Activated T-helper 1 cell treated with anti-CD3 and anti-CD28 coated beads, Interleukin-12 subunit alpha, Interleukin-12 subunit beta, Interleukin-2, Interleukin-4 antibody, amounts not matched to agents 30 ng/mL and 10 ng/mL and 1 ng/mL, durations not matched to agents 14 hours and 24 hours and 36 hours (primary cell): ENCODE measurements at regions of chr6 and their contacts with region 1.

Region 1: GRCh38 chr6:86192123-86192522 is 549.4 kb upstream of the SYNCRIP start:
- DNase-seq: no peak
- H3K4me3 Mint-ChIP-seq: no peak overlapping the region
- H3K27ac Mint-ChIP-seq: no peak overlapping the region
- H3K4me1 Mint-ChIP-seq: no peaks in the 10 kb centered on the region
- H3K27me3 Mint-ChIP-seq: no peaks in the 10 kb centered on the region

Region 2: GRCh38 chr6:85756982-85757381 is 435.1 kb before region 1 on chr6:
- intact Hi-C with region 1: loop called (anchors 5 kb)
- DNase-seq: no peak
- H3K4me3 Mint-ChIP-seq: no peak overlapping the region
- H3K27ac Mint-ChIP-seq: no peak overlapping the region
- H3K4me1 Mint-ChIP-seq: no peaks in the 10 kb centered on the region
- H3K27me3 Mint-ChIP-seq: peaks cover 7% of the 10 kb centered on the region

Region 3: GRCh38 chr6:85923013-85923430 is 269.1 kb before region 1 on chr6:
- intact Hi-C with region 1: loop called (anchors 5 kb)
- DNase-seq: no peak
- H3K4me3 Mint-ChIP-seq: no peak overlapping the region
- H3K27ac Mint-ChIP-seq: no peak overlapping the region
- H3K4me1 Mint-ChIP-seq: no peaks in the 10 kb centered on the region
- H3K27me3 Mint-ChIP-seq: no peaks in the 10 kb centered on the region